Heart right ventricle (tissue), 16 donors: ENCODE measurements at regions of chr17 and their contacts with region 1.

Region 1: DNA sequence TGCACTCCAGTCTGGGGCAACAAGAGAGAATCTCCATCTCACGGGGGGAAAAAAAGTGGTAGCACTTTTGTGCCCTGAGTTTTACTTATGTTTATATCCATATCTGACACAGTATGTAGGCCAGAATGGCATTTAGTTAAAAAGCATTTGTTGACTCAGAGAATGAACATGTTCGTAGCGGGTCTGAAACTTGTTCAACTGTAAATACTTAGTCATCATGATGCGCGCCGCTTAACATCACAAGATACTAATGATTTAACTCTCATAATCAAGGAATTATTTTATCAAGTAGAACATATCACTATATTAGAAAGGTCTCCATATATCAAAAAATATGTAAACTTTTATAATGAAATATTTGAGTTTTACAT is 55.3 kb upstream of the ITGA2B start:
- DNase-seq: no peak
- ATAC-seq: no peak
- H3K4me3 ChIP-seq: no peak overlapping the region
- H3K27ac ChIP-seq: no peak overlapping the region
- H3K4me1 ChIP-seq: peaks cover 0 to 5% (median 0%) of the 10 kb centered on the region in 9 donors
- H3K27me3 ChIP-seq: no peaks in the 10 kb centered on the region
- CTCF ChIP-seq: no peak

Region 2: GRCh38 chr17:44503147-44504029 is 58.7 kb after region 1 on chr17 and contains the start of gene GPATCH8:
- intact Hi-C with region 1: loop called in 1 of 10 experiments (anchors 5 kb)
- DNase-seq: peak; percentile 95 to 97
- ATAC-seq: peak; percentile 98 to 99 (median 99)
- H3K4me3 ChIP-seq: peak within 1 kb of the TSS; percentile 60 to 97 (median 77)
- H3K27ac ChIP-seq: peak within 1 kb of the TSS; percentile 76 to 92 (median 90)
- H3K4me1 ChIP-seq: peaks cover 7 to 49% (median 43%) of the 10 kb centered on the region in 9 donors
- H3K27me3 ChIP-seq: peaks cover 0 to 14% (median 6%) of the 10 kb centered on the region in 7 donors
- CTCF ChIP-seq: no peak
- total RNA-seq, gene GPATCH8: 19.3 to 25.1 (median 22.0) TPM